ENCODE measurements at regions of chr9 and their contacts with region 1.

Region 1: GRCh38 chr9:22008736-22009562 is at the start of gene CDKN2B:
- DNase-seq: peak; percentile 97
- H3K4me3 ChIP-seq: peak within 1 kb of the TSS; percentile 79 to 82
- H3K27ac ChIP-seq: peak within 1 kb of the TSS; percentile 64 to 90
- H3K4me1 ChIP-seq: peaks cover 0 to 16% of the 10 kb centered on the region in 2 experiments; a peak in 2 of 4 replicates
- H3K27me3 ChIP-seq: no peaks in the 10 kb centered on the region; the same call in 1 of the 2 replicates
- CTCF ChIP-seq: peak; percentile 93
- EP300 ChIP-seq: no peak
- RAD21 ChIP-seq: peak; percentile 53
- polyA plus RNA-seq, gene CDKN2B: 6.3 and 6.4 TPM in 2 replicates

Region 2: DNA sequence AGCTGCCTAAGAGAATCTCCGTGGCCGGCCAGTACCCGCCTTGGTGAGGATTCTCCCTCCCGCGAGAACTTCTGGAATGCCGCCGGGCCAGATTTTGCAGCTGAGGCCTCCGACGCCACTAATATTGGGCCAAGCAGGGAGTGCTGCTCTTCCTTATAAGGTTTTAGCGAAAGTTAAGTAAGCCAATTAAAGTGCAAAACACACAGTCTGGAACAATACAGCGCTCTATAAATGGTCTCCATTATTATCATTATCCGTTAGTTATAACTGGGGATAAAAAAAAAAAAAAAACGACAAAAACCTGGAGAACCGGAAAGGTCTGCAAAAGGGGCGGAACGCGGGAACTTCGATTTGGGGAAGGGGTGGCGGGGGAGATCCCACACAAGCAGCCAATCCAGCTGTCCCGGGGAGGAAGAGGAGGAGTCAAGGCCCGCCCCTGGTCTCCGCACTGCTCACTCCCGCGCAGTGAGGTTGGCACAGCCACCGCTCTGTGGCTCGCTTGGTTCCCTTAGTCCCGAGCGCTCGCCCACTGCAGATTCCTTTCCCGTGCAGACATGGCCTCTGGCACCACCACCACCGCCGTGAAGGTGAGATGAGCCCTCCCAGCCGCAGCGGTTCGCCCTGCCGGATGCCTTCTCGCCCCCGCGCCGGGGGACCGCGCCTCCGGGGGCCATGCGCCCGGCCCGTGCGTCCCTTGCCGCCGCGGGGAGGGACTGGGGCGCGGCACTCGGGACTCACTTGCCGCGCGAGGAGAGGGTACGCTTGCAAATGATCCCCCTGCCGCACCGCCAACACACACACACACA is 206.6 kb before region 1 on chr9 and contains the start of gene MTAP:
- CTCF ChIA-PET with region 1: interaction called, 109 read pairs
- POLR2A ChIA-PET with region 1: no interaction called
- DNase-seq: peak; percentile 95
- H3K4me3 ChIP-seq: peak within 1 kb of the TSS; percentile 78 to 80
- H3K27ac ChIP-seq: peak within 1 kb of the TSS; percentile 58 to 88
- H3K4me1 ChIP-seq: peaks cover 0 to 11% of the 10 kb centered on the region in 2 experiments; a peak in 1 of 4 replicates
- H3K27me3 ChIP-seq: no peaks in the 10 kb centered on the region; the same call in 1 of the 2 replicates
- CTCF ChIP-seq: no peak
- EP300 ChIP-seq: 0 out of 4 replicates have a peak, but pooled peaks of 1 of the 2 experiments have one; percentile 9
- RAD21 ChIP-seq: no peak
- polyA plus RNA-seq, gene MTAP: 9.8 and 12.6 TPM in 2 replicates

Region 3: DNA sequence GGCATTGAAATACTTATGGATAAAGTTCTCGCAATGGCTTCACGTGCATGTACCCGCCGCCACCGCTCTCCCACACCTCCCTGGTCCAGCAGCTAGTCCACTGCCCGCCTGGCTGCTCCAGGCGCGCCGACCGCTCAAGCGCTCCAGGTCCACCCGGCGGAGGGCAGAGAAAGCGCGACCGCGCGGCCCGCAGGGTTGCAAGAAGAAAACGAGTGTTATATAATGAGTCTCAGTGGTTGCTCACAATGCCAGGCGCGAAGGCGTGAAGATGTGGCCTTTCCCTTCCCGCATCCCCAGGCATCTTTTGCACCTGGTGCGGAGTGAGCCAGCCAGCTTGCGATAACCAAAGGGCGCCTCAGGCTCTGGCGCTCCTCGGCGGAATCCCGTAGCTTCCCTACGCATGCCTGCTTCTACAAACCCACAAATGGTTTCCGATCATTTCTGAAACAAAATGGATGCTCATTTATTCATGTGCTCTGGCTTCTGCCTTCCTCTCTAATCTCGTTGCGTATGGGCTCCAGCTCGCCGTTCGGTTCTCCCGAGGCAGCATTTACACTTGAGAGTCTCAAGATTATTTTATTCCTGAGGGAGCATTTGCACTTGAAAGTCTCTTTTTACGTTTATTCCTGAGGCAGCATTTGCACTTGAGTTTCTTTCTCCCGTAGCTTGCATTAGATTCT is 40.5 kb before region 1 on chr9:
- CTCF ChIA-PET with region 1: interaction called, 15 read pairs
- POLR2A ChIA-PET with region 1: interaction called, 3 read pairs
- DNase-seq: peak; percentile 68
- H3K4me3 ChIP-seq: peak overlapping the region; percentile 6 to 14; a peak in 2 of 4 replicates
- H3K27ac ChIP-seq: no peak overlapping the region
- H3K4me1 ChIP-seq: peaks cover 0 to 11% of the 10 kb centered on the region in 2 experiments; a peak in 1 of 4 replicates
- H3K27me3 ChIP-seq: peaks cover 64% of the 10 kb centered on the region
- CTCF ChIP-seq: no peak
- EP300 ChIP-seq: no peak
- RAD21 ChIP-seq: no peak

Region 4: GRCh38 chr9:21983561-21983935 is 25.4 kb before region 1 on chr9:
- CTCF ChIA-PET with region 1: interaction called, 20 read pairs
- POLR2A ChIA-PET with region 1: no interaction called
- DNase-seq: no peak
- H3K4me3 ChIP-seq: no peak overlapping the region
- H3K27ac ChIP-seq: no peak overlapping the region
- H3K4me1 ChIP-seq: no peaks in the 10 kb centered on the region; a peak in 1 of 4 replicates
- H3K27me3 ChIP-seq: peaks cover 11% of the 10 kb centered on the region; the same call in 1 of the 2 replicates
- CTCF ChIP-seq: no peak
- EP300 ChIP-seq: no peak
- RAD21 ChIP-seq: no peak

Region 5: DNA sequence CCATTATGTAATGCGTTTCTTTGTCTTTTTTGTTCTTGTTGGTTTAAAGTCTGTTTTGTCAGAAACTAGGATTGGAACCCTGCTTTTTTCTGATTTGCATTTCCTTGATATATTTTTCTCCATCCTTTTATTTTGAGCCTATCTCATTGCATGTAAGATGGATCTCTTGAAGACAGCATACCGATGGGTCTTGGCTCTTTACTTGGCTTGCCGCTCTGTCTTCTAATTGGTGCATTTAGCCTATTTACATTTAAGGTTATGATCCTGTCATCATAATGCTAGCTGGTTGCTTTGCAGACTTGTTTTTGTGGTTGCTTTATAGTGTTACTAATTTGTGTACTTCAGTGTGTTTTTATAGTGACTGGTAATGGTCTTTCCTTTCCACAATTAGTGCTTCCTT is 13.4 kb after region 1 on chr9:
- CTCF ChIA-PET with region 1: interaction called, 13 read pairs
- POLR2A ChIA-PET with region 1: no interaction called
- DNase-seq: no peak
- H3K4me3 ChIP-seq: no peak overlapping the region
- H3K27ac ChIP-seq: no peak overlapping the region
- H3K4me1 ChIP-seq: no peaks in the 10 kb centered on the region
- H3K27me3 ChIP-seq: no peaks in the 10 kb centered on the region
- CTCF ChIP-seq: no peak
- EP300 ChIP-seq: no peak
- RAD21 ChIP-seq: no peak

Region 6: DNA sequence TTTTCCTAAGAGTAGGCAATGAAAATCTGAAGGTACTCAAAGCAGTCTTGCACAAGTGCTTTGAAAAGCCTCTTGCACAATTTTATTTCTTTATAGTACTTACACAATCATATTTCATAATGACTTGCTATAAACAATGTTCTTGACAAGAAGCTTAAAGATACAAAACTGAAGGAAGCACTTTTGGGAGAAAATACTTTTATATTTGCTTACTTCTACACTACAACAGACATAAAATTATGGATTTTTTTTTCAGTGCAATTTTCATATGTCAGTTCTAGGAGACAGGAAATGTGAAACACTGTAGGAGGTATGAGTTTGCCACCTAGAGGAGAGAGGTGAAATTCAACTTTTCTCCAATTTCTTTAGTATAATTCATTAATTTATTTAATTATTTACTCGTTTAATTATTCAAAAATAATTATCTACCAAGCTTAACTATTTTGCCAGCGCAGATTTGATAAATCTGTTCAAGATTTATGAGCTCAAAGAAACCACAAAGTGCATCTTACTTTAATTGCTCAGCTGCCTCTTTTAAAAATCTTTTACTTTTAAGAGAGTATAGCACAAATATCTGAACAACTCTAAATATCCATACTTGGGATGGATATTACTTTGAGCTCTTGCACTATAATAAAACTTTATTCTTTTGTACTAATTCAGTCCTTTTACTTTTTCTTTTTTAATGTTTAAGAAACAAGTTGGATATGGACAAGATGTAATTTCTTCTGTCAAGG is 29.2 kb after region 1 on chr9:
- CTCF ChIA-PET with region 1: interaction called, 24 read pairs
- POLR2A ChIA-PET with region 1: interaction called, 3 read pairs
- DNase-seq: peak; percentile 4
- H3K4me3 ChIP-seq: no peak overlapping the region
- H3K27ac ChIP-seq: no peak overlapping the region
- H3K4me1 ChIP-seq: no peaks in the 10 kb centered on the region; a peak in 1 of 4 replicates
- H3K27me3 ChIP-seq: no peaks in the 10 kb centered on the region
- CTCF ChIP-seq: peak; percentile 57
- EP300 ChIP-seq: no peak
- RAD21 ChIP-seq: peak; percentile 73

Region 7: DNA sequence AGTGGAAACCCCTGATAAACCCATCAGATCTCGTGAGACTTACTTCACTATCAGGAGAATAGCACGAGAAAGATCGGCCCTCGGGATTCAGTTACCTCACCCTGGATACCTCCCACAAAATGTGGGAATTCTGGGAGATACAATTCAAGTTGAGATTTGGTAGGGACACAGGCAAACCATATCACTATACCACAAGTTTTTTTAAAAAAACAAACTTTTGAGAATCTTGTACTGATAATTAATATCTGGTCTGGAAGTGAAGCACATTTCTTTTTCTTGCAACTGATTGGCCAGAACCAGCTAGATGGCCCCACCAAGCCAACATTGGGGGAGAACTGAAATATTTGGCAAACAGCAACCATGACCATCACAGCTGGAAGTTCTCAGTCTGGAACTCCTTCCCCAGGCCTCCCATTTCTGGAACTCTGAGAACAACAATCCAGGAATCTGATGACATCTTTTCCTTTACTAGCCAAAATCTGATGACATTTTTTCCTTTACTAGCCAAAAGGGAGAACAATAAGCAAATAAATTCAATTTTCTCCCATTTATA is 52.0 kb after region 1 on chr9:
- CTCF ChIA-PET with region 1: no interaction called
- POLR2A ChIA-PET with region 1: no interaction called
- DNase-seq: no peak
- H3K4me3 ChIP-seq: no peak overlapping the region
- H3K27ac ChIP-seq: no peak overlapping the region
- H3K4me1 ChIP-seq: no peaks in the 10 kb centered on the region
- H3K27me3 ChIP-seq: no peaks in the 10 kb centered on the region
- CTCF ChIP-seq: no peak
- EP300 ChIP-seq: no peak
- RAD21 ChIP-seq: no peak

Region 8: GRCh38 chr9:22111954-22112247 is 103.0 kb after region 1 on chr9:
- CTCF ChIA-PET with region 1: no interaction called
- POLR2A ChIA-PET with region 1: no interaction called
- DNase-seq: no peak
- H3K4me3 ChIP-seq: no peak overlapping the region
- H3K27ac ChIP-seq: peak overlapping the region in 1 of 2 experiments; percentile 93; a peak in 2 of 4 replicates
- H3K4me1 ChIP-seq: peaks cover 0 to 7% of the 10 kb centered on the region in 2 experiments; a peak in 2 of 4 replicates
- H3K27me3 ChIP-seq: no peaks in the 10 kb centered on the region
- CTCF ChIP-seq: no peak
- EP300 ChIP-seq: no peak
- RAD21 ChIP-seq: no peak

Measured in SK-N-SH (cell line).